ENCODE measurements at regions of chr11 and their contacts with region 1.

Region 1: DNA sequence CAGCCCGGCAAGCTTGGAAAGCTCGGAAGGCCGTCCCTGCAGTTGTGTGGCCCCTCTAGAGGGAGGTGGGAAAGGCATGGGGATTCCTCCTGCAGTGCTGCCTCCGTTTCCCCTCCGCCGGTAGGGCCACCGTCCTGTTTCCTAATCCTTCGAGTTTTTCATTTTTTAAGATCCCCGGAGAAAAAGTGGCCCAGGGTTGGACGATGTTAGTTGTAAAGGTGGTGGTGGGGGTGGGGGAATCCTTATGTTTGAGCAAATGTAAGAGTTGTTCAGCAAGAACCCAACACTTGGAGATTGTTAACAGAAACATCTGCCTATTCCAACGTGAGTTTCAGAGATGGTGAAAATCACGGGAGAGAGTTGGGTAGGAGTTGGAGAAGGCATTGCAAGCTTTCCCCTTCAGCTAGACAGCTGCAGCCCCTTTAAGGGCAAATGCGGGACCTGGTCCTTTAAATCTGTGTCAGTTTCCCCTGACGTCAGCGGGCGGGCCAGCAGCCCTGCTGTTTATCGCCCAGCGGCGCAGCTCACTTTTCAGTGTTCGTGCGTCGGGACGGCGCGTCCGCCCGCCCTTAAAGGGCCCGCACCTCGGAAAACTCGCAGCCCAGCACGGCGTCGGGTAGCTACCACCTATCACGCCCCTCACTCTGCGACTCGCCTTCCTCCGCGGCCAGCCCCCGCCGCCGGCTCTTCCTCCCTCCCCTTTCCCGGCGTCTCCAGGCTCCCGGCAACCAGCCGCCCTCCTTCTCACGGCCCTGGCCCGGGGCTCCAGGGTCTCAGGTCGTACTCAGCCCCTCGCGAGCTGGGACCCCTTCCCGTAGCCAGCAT is at the start of gene SIDT2:
- DNase-seq: no peak
- H3K4me3 ChIP-seq: peak within 1 kb of the TSS; percentile 72 to 97
- H3K27ac ChIP-seq: peak within 1 kb of the TSS; percentile 94
- H3K4me1 ChIP-seq: peaks cover 35% of the 10 kb centered on the region
- H3K27me3 ChIP-seq: no peaks in the 10 kb centered on the region
- CTCF ChIP-seq: no peak
- POLR2A ChIP-seq: peak; percentile 40 to 97
- total RNA-seq, gene SIDT2: 24.8 TPM

Region 2: DNA sequence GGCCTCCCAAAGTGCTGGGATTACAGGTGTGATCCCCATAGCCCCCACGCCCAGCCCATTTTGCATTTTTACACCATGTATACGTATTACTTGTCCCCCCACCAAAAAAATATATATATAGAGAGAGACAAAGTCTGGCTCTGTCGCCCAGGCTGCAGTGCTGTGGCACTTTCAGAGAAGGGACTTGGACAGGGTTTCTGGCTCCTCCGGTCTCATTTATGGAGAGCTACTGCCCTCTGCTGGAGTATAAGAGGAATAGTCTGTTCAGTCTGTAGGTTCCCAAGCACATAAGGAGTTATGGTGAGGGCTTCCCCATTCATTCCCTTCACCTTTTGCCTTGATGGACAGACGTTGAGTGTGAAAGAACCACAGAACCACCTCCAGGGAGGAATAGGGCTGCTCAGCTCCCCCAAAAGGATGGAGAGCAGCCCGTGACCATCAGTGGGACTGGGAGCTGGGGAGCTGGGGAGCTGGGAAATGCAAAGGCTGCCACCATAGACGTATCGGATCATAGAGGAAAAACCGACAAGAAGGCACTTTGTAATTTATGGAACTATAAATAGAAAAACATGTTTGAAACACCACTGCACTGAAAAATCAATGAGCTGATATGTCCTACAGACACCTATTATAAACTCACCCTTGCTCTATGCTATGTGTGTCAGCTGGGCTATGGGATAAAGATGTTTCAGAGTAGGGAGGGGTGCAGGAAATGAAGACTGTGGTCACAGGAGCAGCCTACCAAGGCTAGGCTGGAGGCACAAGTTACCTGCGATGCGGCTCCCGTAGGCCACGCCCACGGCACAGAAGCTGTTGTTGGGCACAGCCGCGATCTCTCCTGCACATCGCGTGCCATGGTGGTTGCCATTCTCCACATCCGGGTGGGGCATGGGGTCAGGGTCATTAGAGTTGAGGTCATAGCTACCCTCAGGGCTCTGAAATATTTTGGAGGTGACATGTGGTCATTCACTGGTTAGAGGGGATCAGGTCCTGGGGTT is 48.3 kb after region 1 on chr11:
- intact Hi-C with region 1: loop called (anchors 10 kb)
- DNase-seq: no peak
- H3K4me3 ChIP-seq: no peak overlapping the region
- H3K27ac ChIP-seq: no peak overlapping the region
- H3K4me1 ChIP-seq: peaks cover 36% of the 10 kb centered on the region
- H3K27me3 ChIP-seq: no peaks in the 10 kb centered on the region
- CTCF ChIP-seq: peak; percentile 74 to 85 (median 81)
- POLR2A ChIP-seq: no peak

Measured in vagina (tissue), 2 donors.